T-cell (primary cell): ENCODE measurements at regions of chr10 and their contacts with region 1.

Region 1: DNA sequence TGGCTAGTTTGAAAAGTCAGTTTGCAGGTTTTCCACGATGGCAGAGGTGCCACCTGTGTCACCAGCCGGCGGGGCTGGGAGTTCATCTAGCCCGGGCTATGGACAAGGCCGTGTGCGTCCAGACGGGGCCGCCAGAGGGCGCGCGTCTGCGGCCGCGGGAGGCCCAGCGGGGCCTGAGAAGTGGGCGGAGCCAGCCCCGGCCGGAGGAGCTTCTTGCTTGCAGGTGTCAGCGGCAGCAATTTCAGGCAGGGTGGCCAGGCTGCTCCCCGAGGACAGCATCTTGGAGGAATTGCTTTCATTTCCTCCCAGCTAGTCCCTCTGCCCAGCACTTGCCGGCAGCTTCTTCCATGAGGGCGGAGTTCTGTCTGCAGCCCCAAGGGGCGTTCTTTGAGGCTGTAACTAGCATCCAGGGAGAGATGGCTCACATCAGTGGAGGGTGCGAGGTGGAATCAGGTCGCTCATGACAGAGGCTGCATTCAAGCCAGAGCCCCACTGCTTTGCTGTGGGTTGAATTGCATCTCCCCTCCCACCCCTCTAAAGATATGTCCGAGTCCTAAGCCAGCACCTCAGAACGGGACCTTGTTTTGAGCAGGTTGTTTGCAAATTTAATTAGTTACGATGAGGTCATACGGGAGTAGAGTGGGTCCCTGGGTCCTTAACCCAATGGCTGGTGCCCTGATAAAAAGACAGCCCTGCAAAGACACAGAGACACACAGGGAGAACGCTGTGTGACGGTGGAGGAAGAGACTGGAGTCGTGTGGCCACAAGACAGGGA is 85.9 kb upstream of the MKI67 start:
- DNase-seq: peak; percentile 52 to 91 (median 70)
- ATAC-seq: peak; percentile 72 to 78 (median 74)
- H3K4me3 ChIP-seq: peak overlapping the region; percentile 40 to 53
- H3K4me3 Mint-ChIP-seq: peak overlapping the region; percentile 76 to 85 (median 84)
- H3K27ac ChIP-seq: peak overlapping the region; percentile 16
- H3K27ac Mint-ChIP-seq: peak overlapping the region; percentile 77 to 87
- H3K4me1 ChIP-seq: peaks cover 0 to 26% of the 10 kb centered on the region in 2 experiments
- H3K4me1 Mint-ChIP-seq: peaks cover 13 to 14% (median 14%) of the 10 kb centered on the region in 3 donors
- H3K27me3 ChIP-seq: peaks cover 0 to 4% of the 10 kb centered on the region in 2 experiments
- H3K27me3 Mint-ChIP-seq: peaks cover 1 to 4% of the 10 kb centered on the region in 2 donors

Region 2: DNA sequence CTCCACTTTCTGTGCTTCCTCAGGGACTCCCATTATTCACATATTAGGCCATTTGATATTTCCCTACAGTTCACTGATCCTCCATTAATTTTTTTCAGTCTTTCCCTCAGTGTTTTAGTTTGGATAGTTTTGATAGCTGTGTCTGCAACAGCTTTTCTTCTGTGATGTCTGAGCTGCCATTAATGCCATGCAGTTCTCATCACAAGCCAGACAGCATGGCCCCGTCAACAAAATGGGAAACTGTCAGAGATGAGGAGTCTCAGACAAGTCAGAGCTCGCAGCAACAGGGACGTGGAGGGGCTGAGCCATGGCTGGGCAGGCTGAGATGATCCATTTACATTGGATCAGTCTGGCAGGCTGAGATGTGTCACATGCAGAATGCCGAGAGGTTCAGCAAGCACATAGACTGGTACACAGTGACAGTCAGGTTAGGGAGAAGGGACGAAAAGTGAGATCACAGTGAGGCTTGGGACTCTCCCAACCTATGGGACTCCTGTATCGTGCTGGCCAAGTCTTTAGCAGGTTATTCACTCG is 597.6 kb before region 1 on chr10:
- CTCF ChIA-PET with region 1: no interaction called
- POLR2A ChIA-PET with region 1: no interaction called
- DNase-seq: no peak
- ATAC-seq: no peak
- H3K4me3 ChIP-seq: no peak overlapping the region
- H3K4me3 Mint-ChIP-seq: no peak overlapping the region
- H3K27ac ChIP-seq: no peak overlapping the region
- H3K27ac Mint-ChIP-seq: no peak overlapping the region
- H3K4me1 ChIP-seq: no peaks in the 10 kb centered on the region
- H3K4me1 Mint-ChIP-seq: no peaks in the 10 kb centered on the region
- H3K27me3 ChIP-seq: peaks cover 0 to 2% of the 10 kb centered on the region in 2 experiments
- H3K27me3 Mint-ChIP-seq: peaks cover 3% of the 10 kb centered on the region in 2 donors

Region 3: GRCh38 chr10:127690176-127690835 is 521.8 kb before region 1 on chr10:
- CTCF ChIA-PET with region 1: no interaction called
- POLR2A ChIA-PET with region 1: no interaction called
- DNase-seq: no peak
- ATAC-seq: no peak
- H3K4me3 ChIP-seq: no peak overlapping the region
- H3K4me3 Mint-ChIP-seq: no peak overlapping the region
- H3K27ac ChIP-seq: no peak overlapping the region
- H3K27ac Mint-ChIP-seq: no peak overlapping the region
- H3K4me1 ChIP-seq: no peaks in the 10 kb centered on the region
- H3K4me1 Mint-ChIP-seq: no peaks in the 10 kb centered on the region
- H3K27me3 ChIP-seq: no peaks in the 10 kb centered on the region
- H3K27me3 Mint-ChIP-seq: peaks cover 0 to 5% of the 10 kb centered on the region in 2 donors

Region 4: GRCh38 chr10:128178319-128178958 is 33.7 kb before region 1 on chr10:
- CTCF ChIA-PET with region 1: interaction called, 9 to 14 read pairs
- POLR2A ChIA-PET with region 1: interaction called in 1 of 2 experiments, 3 read pairs
- DNase-seq: peak in 33 of 35 experiments; percentile 10 to 55 (median 24)
- ATAC-seq: peak; percentile 47 to 68 (median 60)
- H3K4me3 ChIP-seq: no peak overlapping the region
- H3K4me3 Mint-ChIP-seq: no peak overlapping the region
- H3K27ac ChIP-seq: no peak overlapping the region
- H3K27ac Mint-ChIP-seq: no peak overlapping the region
- H3K4me1 ChIP-seq: peaks cover 5 to 14% of the 10 kb centered on the region in 2 experiments
- H3K4me1 Mint-ChIP-seq: peaks cover 31 to 35% (median 34%) of the 10 kb centered on the region in 3 donors
- H3K27me3 ChIP-seq: peaks cover 0 to 2% of the 10 kb centered on the region in 2 experiments
- H3K27me3 Mint-ChIP-seq: peaks cover 0 to 7% of the 10 kb centered on the region in 2 donors